ENCODE measurements at regions of chr6 and their contacts with region 1.

Region 1: GRCh38 chr6:129376752-129377151 is 333.2 kb downstream of the ARHGAP18 start:
- DNase-seq: no peak
- ATAC-seq: no peak
- H3K4me3 Mint-ChIP-seq: no peak overlapping the region
- H3K27ac Mint-ChIP-seq: no peak overlapping the region
- H3K4me1 Mint-ChIP-seq: no peaks in the 10 kb centered on the region
- H3K27me3 Mint-ChIP-seq: peaks cover 11% of the 10 kb centered on the region
- CTCF ChIP-seq: no peak

Region 2: GRCh38 chr6:129469070-129469662 is 92.4 kb after region 1 on chr6:
- CTCF ChIA-PET with region 1: no interaction called
- POLR2A ChIA-PET with region 1: no interaction called
- intact Hi-C with region 1: no loop called
- DNase-seq: no peak
- ATAC-seq: no peak
- H3K4me3 Mint-ChIP-seq: no peak overlapping the region
- H3K27ac Mint-ChIP-seq: no peak overlapping the region
- H3K4me1 Mint-ChIP-seq: no peaks in the 10 kb centered on the region
- H3K27me3 Mint-ChIP-seq: peaks cover 23% of the 10 kb centered on the region
- CTCF ChIP-seq: no peak

Region 3: DNA sequence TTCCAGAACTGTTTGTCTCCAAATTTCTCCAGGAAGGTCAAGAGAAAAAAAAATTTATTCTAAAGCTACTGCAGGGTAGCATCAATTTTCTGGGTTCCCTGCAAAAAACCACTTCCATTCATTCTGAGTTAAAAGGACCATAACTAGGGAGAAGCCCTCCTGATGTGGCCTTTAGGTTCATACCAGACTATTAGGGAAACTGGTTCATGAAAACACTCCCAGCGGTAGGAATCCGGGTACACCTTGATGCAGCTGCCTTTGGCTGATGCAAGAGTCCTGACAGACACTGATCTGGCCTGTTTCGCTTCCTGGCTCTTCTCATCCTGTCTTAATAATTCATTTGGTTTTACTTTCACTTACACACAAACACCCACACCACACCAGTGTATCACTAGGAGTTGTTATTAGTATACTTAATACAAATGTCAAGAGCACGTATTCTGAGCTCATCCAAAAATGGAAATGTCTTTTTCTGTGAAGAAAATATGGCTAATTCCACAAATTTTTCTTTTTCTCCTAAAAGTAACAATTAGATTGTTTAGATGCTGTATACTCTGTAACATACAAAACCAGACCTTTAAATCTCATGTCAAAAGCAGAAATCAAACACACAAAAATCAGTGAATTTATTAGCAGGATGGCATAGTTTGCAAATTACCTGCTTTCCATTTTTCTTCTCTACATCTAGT is 371.6 kb after region 1 on chr6:
- CTCF ChIA-PET with region 1: no interaction called
- POLR2A ChIA-PET with region 1: interaction called, 15 read pairs
- intact Hi-C with region 1: no loop called
- DNase-seq: no peak
- ATAC-seq: peak; percentile 89
- H3K4me3 Mint-ChIP-seq: peak overlapping the region; percentile 66
- H3K27ac Mint-ChIP-seq: peak overlapping the region; percentile 94
- H3K4me1 Mint-ChIP-seq: peaks cover 50% of the 10 kb centered on the region
- H3K27me3 Mint-ChIP-seq: no peaks in the 10 kb centered on the region
- CTCF ChIP-seq: no peak

Measured in activated B cell treated with CpG ODN at 0.5 μM for 24 hours (primary cell).